T-cell (primary cell): ENCODE measurements at regions of chr13 and their contacts with region 1.

Region 1: GRCh38 chr13:83503424-83503823 is 378.9 kb downstream of the SLITRK1 start:
- DNase-seq: no peak
- ATAC-seq: no peak
- H3K4me3 ChIP-seq: no peak overlapping the region
- H3K4me3 Mint-ChIP-seq: no peak overlapping the region
- H3K27ac ChIP-seq: no peak overlapping the region
- H3K27ac Mint-ChIP-seq: no peak overlapping the region
- H3K4me1 ChIP-seq: no peaks in the 10 kb centered on the region
- H3K4me1 Mint-ChIP-seq: no peaks in the 10 kb centered on the region
- H3K27me3 ChIP-seq: no peaks in the 10 kb centered on the region
- H3K27me3 Mint-ChIP-seq: no peaks in the 10 kb centered on the region

Region 2: GRCh38 chr13:83485101-83485500 is 18.3 kb before region 1 on chr13:
- CTCF ChIA-PET with region 1: no interaction called
- POLR2A ChIA-PET with region 1: interaction called in 1 of 2 experiments, 14 read pairs
- DNase-seq: no peak
- ATAC-seq: no peak
- H3K4me3 ChIP-seq: no peak overlapping the region
- H3K4me3 Mint-ChIP-seq: no peak overlapping the region
- H3K27ac ChIP-seq: no peak overlapping the region
- H3K27ac Mint-ChIP-seq: no peak overlapping the region
- H3K4me1 ChIP-seq: no peaks in the 10 kb centered on the region
- H3K4me1 Mint-ChIP-seq: no peaks in the 10 kb centered on the region
- H3K27me3 ChIP-seq: no peaks in the 10 kb centered on the region
- H3K27me3 Mint-ChIP-seq: no peaks in the 10 kb centered on the region